Activated naive CD4-positive, alpha-beta T cell treated with anti-CD3 and anti-CD28 coated beads for 36 hours (primary cell): ENCODE measurements at regions of chrX and their contacts with region 1.

Region 1: DNA sequence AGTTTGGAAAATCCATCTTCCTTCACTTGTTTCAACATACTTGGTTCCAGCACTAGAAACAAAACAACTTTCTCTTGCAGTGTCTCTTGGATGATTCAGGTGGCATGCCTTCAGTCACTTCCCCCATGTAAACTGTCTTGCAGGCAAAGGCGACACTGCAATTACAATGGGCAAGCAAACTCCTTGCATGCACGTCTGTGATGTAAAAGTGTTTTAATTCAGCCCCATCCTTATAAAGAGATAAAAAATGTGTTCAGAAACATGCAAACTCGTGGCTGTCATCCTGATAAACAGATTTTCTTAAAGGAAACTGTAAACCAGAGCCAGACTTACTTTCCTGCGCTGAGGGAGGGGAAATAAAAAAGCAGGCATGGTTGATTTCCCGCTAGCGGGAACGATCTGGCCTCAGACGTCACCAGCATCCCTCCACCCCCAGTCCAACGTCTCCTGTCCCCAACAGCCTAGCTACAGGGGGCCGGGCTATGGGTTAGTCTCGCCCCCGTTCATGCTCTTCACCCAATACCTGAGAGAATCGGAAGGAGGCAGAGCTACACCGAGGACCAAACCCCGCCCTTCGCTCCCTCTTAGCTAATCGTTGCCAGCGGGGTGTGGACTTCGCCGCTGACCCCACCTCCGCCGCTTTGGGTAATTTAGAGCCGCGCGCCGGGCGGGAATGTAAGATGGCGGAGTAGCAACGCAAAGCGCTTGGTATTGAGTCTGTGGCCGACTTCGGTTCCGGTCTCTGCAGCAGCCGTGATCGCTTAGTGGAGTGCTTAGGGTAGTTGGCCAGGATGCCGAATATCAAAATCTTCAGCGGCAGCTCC is at the start of gene PRPS1:
- DNase-seq: peak; percentile 94
- H3K4me3 Mint-ChIP-seq: peak within 1 kb of the TSS; percentile 91
- H3K27ac Mint-ChIP-seq: peak within 1 kb of the TSS; percentile 95
- H3K4me1 Mint-ChIP-seq: peaks cover 26% of the 10 kb centered on the region
- H3K27me3 Mint-ChIP-seq: no peaks in the 10 kb centered on the region
- total RNA-seq, gene PRPS1: 195 to 196 TPM

Region 2: DNA sequence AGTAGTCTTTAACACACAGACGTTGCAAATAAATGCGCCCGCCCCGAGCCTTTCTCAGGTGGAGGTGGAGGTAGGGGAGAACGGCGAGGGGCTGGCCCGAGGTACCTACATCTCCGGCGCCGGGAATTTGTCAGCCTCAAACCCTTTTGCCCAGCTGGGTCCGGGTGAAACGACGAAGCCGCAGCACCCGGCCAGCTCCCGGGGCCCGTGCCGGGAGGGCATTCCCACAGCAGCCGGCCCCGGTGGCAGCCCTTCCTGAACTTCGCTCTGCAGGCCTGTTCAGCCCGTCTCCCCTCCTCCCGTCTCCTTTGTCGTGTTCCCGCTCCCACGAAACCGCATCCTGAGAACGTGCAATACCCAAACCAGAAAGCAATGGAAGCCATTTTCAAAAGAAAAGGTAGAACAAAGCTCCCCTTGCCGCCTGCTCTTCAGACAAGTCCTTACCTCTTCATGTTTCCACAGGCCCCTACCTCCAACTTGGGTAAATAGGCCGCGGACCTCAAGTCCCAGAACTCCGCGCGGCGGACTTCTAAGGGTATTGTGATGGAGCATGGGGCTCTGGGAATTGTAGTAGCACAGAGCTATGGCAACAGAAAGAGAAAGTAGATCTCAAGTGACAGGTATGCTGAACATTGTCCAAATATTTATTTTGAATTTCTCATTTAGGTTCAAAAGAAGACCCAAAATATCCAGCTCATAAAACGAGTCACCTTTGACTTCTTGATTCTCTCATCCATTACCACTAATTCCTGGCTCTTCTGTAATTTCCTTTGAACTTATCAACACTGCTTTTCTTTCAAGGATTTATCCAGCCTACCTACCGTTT is 509.5 kb before region 1 on chrX and contains the start of gene RBM41:
- CTCF ChIA-PET with region 1: no interaction called
- intact Hi-C with region 1: loop called (anchors 2 kb)
- DNase-seq: peak; percentile 82
- H3K4me3 Mint-ChIP-seq: peak within 1 kb of the TSS; percentile 99
- H3K27ac Mint-ChIP-seq: peak within 1 kb of the TSS; percentile 95
- H3K4me1 Mint-ChIP-seq: peaks cover 24% of the 10 kb centered on the region
- H3K27me3 Mint-ChIP-seq: no peaks in the 10 kb centered on the region
- total RNA-seq, gene RBM41: 10.4 to 11.1 TPM

Region 3: DNA sequence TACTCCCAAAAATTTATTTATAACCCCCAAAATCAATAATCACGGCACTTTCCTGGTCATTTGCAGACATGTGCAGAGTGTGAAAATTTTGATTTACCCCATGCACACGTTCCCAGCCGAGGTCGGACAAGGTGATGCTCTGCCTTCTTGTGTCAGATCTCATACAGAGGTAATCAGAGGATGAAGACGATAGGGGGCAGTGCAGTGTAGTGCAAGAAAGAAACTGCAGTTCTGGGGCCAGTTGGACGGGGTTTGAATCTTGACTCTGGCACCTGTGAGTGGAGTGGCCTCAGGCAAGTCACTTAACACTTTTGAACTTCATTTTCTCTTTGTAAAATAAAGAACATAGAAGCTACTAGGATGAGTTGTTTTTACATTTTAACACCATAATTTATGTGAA is 90.2 kb before region 1 on chrX:
- CTCF ChIA-PET with region 1: interaction called, 8 read pairs
- intact Hi-C with region 1: loop called (anchors 1 kb)
- DNase-seq: peak; percentile 68
- H3K4me3 Mint-ChIP-seq: no peak overlapping the region
- H3K27ac Mint-ChIP-seq: no peak overlapping the region
- H3K4me1 Mint-ChIP-seq: no peaks in the 10 kb centered on the region
- H3K27me3 Mint-ChIP-seq: peaks cover 3% of the 10 kb centered on the region

Region 4: GRCh38 chrX:107710617-107711391 is 82.8 kb after region 1 on chrX:
- CTCF ChIA-PET with region 1: no interaction called
- intact Hi-C with region 1: loop called (anchors 1 kb)
- DNase-seq: peak; percentile 67
- H3K4me3 Mint-ChIP-seq: peak overlapping the region; percentile 53
- H3K27ac Mint-ChIP-seq: peak overlapping the region; percentile 90
- H3K4me1 Mint-ChIP-seq: peaks cover 46% of the 10 kb centered on the region
- H3K27me3 Mint-ChIP-seq: no peaks in the 10 kb centered on the region

Region 5: GRCh38 chrX:107826238-107827029 is 198.4 kb after region 1 on chrX:
- CTCF ChIA-PET with region 1: no interaction called
- intact Hi-C with region 1: loop called (anchors 1 kb)
- DNase-seq: peak; percentile 14
- H3K4me3 Mint-ChIP-seq: peak overlapping the region; percentile 77
- H3K27ac Mint-ChIP-seq: peak overlapping the region; percentile 73
- H3K4me1 Mint-ChIP-seq: peaks cover 53% of the 10 kb centered on the region
- H3K27me3 Mint-ChIP-seq: no peaks in the 10 kb centered on the region